Adrenal gland (tissue), 19 donors: ENCODE measurements at regions of chr20 and their contacts with region 1.

Region 1: DNA sequence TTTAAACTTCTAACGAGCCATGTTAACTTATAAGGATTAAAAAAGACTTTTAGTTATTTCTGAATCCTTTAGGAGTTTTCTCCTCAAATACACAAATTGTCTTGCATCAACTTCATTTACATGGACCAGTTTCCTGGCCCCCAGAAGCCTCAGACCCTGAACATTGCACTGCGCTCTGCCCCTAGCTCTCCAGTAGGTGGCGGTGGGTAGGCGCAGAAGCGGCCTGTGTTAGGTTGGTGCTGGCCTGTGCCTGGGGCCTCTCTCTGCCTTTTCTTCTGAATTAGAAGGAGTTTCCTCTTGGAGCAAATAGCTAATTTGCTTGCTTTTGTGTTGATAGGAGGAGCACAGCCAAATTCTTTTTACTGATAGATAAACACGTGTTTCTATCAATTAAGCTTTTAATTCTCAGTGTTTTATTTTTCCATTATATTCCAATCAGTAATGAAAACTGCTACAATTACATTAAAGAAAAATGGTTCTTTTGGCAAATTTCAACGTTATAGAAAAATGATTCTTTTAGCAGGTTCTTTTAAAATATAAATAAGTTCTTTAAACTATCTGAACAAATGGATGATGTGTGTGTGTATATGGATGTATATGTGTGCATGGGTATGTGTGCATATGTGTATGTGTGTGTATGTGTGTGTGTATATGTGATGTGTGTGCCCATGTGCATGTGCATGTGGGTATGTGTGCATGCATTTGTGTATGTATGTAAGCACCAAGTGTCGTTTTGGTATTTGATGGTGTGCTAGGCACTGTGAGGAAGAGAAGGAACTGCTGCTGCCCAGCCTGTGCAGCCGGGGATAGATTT is 44.5 kb downstream of the DTD1 start:
- DNase-seq: peak; percentile 61 to 82 (median 75)
- H3K4me3 ChIP-seq: no peak overlapping the region
- H3K27ac ChIP-seq: no peak overlapping the region
- H3K4me1 ChIP-seq: no peaks in the 10 kb centered on the region
- H3K27me3 ChIP-seq: no peaks in the 10 kb centered on the region
- CTCF ChIP-seq: peak; percentile 74 to 94 (median 86)
- POLR2A ChIP-seq: no peak

Region 2: GRCh38 chr20:18783385-18783959 is 151.1 kb after region 1 on chr20:
- intact Hi-C with region 1: loop called in 1 of 2 experiments (anchors 10 kb)
- DNase-seq: no peak
- H3K4me3 ChIP-seq: no peak overlapping the region
- H3K27ac ChIP-seq: no peak overlapping the region
- H3K4me1 ChIP-seq: no peaks in the 10 kb centered on the region
- H3K27me3 ChIP-seq: no peaks in the 10 kb centered on the region
- CTCF ChIP-seq: no peak
- POLR2A ChIP-seq: no peak

Region 3: DNA sequence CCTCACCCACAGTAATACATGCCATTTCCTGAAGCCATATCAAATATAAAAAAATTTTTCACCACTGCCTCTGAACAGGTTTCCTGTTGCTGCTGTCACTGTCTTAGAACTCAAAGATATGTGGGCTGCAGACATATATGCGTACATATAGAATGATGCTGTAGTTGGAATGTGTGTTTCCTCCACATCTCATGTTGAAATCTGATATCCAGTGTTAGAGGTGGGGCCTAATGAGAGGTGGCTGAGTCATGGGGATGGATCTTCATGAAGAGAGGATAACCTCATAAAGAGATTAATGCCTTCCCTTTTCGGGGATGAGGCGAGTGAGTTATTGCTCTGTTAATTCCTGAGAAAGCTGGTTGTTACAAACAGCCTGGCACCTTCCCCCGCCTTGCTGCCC is 173.5 kb after region 1 on chr20:
- intact Hi-C with region 1: loop called in 1 of 2 experiments (anchors 10 kb)
- DNase-seq: no peak
- H3K4me3 ChIP-seq: no peak overlapping the region
- H3K27ac ChIP-seq: no peak overlapping the region
- H3K4me1 ChIP-seq: no peaks in the 10 kb centered on the region
- H3K27me3 ChIP-seq: no peaks in the 10 kb centered on the region
- CTCF ChIP-seq: no peak
- POLR2A ChIP-seq: no peak